ENCODE measurements at regions of chr9 and their contacts with region 1.

Region 1: GRCh38 chr9:128863647-128864046 is 18.1 kb downstream of the KYAT1 start:
- DNase-seq: peak; percentile 86
- ATAC-seq: peak; percentile 98
- H3K4me3 ChIP-seq: no peak overlapping the region
- H3K4me3 Mint-ChIP-seq: no peak overlapping the region
- H3K27ac ChIP-seq: no peak overlapping the region
- H3K27ac Mint-ChIP-seq: peak overlapping the region; percentile 37
- H3K4me1 ChIP-seq: peaks cover 3 to 4% of the 10 kb centered on the region in 2 donors
- H3K4me1 Mint-ChIP-seq: peaks cover 4% of the 10 kb centered on the region
- H3K27me3 ChIP-seq: no peaks in the 10 kb centered on the region
- H3K27me3 Mint-ChIP-seq: no peaks in the 10 kb centered on the region
- CTCF ChIP-seq: peak; percentile 92

Region 2: GRCh38 chr9:128286440-128286839 is 577.2 kb before region 1 on chr9:
- CTCF ChIA-PET with region 1: no interaction called
- POLR2A ChIA-PET with region 1: no interaction called
- intact Hi-C with region 1: no loop called
- DNase-seq: no peak
- ATAC-seq: no peak
- H3K4me3 ChIP-seq: no peak overlapping the region
- H3K4me3 Mint-ChIP-seq: no peak overlapping the region
- H3K27ac ChIP-seq: no peak overlapping the region
- H3K27ac Mint-ChIP-seq: no peak overlapping the region
- H3K4me1 ChIP-seq: peaks cover 0 to 9% of the 10 kb centered on the region in 2 donors
- H3K4me1 Mint-ChIP-seq: peaks cover 6% of the 10 kb centered on the region
- H3K27me3 ChIP-seq: no peaks in the 10 kb centered on the region
- H3K27me3 Mint-ChIP-seq: no peaks in the 10 kb centered on the region
- CTCF ChIP-seq: no peak

Region 3: DNA sequence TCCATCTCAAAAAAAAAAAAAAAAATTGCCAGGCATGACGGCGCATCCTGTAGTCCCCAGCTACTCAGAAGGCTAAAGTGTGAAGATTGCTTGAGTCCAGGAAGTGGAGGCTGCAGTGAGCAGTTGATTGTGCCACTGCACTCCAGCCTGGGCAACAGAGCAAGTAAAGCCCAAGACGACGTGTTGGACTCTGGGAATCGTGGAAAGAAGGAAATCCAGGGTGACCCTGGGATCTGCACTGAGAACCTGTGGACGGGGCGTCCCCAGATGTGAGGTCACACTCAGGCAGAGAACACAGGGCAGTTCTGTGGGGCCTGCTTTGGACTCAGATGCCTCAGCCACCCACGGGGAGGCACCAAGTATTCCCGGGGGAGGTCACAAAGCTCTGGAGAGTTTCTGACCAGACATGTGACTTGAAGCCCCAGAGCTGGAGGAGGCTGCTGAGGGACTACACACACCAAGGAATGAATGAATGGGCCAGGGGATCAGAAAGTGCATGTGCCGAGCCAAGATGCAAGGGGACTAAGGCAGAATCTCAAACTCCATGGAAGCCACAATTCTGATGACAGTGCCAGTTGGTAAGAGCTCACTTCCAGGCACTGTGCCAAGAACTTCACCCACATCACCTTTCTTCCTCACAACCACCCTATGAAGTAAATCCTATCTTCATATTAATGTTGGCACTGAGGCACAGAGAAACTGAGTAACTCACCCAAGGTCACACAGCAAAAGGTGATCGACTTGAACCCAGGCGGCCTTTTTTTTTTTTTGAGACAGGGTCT is 219.9 kb before region 1 on chr9:
- CTCF ChIA-PET with region 1: interaction called, 4 read pairs
- POLR2A ChIA-PET with region 1: interaction called, 3 read pairs
- intact Hi-C with region 1: loop called (anchors 5 kb)
- DNase-seq: peak; percentile 50
- ATAC-seq: peak; percentile 71
- H3K4me3 ChIP-seq: no peak overlapping the region
- H3K4me3 Mint-ChIP-seq: peak overlapping the region; percentile 69
- H3K27ac ChIP-seq: peak overlapping the region; percentile 29 to 56
- H3K27ac Mint-ChIP-seq: peak overlapping the region; percentile 92
- H3K4me1 ChIP-seq: peaks cover 6 to 15% of the 10 kb centered on the region in 2 donors
- H3K4me1 Mint-ChIP-seq: peaks cover 18% of the 10 kb centered on the region
- H3K27me3 ChIP-seq: no peaks in the 10 kb centered on the region
- H3K27me3 Mint-ChIP-seq: no peaks in the 10 kb centered on the region
- CTCF ChIP-seq: no peak

Region 4: GRCh38 chr9:129139993-129140396 is 276.3 kb after region 1 on chr9:
- CTCF ChIA-PET with region 1: no interaction called
- POLR2A ChIA-PET with region 1: no interaction called
- intact Hi-C with region 1: no loop called
- DNase-seq: peak; percentile 95
- ATAC-seq: peak; percentile 83
- H3K4me3 ChIP-seq: peak overlapping the region; percentile 43 to 64 (median 57)
- H3K4me3 Mint-ChIP-seq: peak overlapping the region; percentile 90
- H3K27ac ChIP-seq: peak overlapping the region; percentile 97 to 100
- H3K27ac Mint-ChIP-seq: peak overlapping the region; percentile 94
- H3K4me1 ChIP-seq: peaks cover 43 to 50% of the 10 kb centered on the region in 2 donors
- H3K4me1 Mint-ChIP-seq: peaks cover 47% of the 10 kb centered on the region
- H3K27me3 ChIP-seq: no peaks in the 10 kb centered on the region
- H3K27me3 Mint-ChIP-seq: no peaks in the 10 kb centered on the region
- CTCF ChIP-seq: no peak

Measured in B cell (primary cell).